ENCODE measurements at regions of chr14 and their contacts with region 1.

Region 1: DNA sequence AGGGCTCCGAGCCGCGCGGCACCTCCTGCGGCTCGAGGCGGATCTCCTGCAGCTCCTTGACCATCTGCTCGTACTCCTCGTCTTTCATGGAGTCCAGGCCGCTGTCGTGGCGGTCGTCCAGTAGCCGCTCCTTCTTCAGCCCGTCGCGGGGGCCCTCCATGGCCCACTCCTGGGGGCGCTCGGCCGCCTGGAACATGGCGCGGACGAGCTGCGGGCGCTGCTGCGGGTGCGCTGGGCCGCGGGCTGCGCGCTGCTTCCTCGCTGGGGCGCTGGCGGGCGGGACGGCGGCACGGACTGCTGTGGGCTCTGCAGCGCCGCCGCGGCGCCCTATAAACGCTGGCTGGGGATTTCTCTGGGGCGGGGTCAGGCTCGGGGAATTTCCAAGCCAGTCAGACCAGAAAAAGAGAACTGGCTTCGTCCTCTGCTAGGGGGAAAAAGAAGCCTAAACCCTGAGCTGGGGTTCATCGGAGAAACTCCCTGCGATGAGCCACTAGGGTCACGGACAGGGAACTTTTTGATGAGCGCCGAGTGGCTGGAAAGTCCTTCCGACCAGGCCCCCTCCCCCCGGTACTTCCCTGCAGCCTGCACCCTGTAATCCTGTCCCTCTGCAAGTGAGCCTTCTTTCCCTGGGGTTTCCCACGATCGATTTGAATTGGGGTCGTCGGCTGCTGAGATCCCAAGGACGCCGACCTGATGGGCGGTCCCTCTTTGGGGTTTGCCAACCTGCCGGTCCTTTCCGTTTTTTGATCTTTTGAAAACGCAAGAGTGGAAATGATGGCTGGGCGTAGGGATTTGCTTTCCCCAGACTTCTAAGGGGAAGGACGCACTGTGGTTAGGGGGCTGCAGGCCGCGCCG is at the start of gene NFKBIA:
- DNase-seq: peak; percentile 86
- ATAC-seq: peak; percentile 63
- H3K4me3 ChIP-seq: peak within 1 kb of the TSS; percentile 98
- H3K27ac ChIP-seq: peak within 1 kb of the TSS; percentile 89
- H3K4me1 ChIP-seq: peaks cover 14% of the 10 kb centered on the region
- H3K27me3 ChIP-seq: no peaks in the 10 kb centered on the region
- CTCF ChIP-seq: peak; percentile 35 to 39 (median 39); a peak in 3 of 6 replicates
- EP300 ChIP-seq: peak; percentile 78 to 83; a peak in 2 of 4 replicates
- POLR2A ChIP-seq: peak; percentile 95
- RAD21 ChIP-seq: peak; percentile 25; the same call in 1 of the 2 replicates
- polyA plus RNA-seq, gene NFKBIA: 123 to 159 TPM

Region 2: GRCh38 chr14:35140718-35141581 is 263.7 kb before region 1 on chr14:
- CTCF ChIA-PET with region 1: interaction called, 324 read pairs
- POLR2A ChIA-PET with region 1: interaction called, 5 read pairs
- RAD21 ChIA-PET with region 1: interaction called, 257 read pairs
- SMC1A ChIA-PET with region 1: interaction called, 362 read pairs
- in situ Hi-C with region 1: loop called (anchors 5 kb)
- intact Hi-C with region 1: loop called (anchors 1 kb)
- DNase-seq: no peak
- ATAC-seq: peak; percentile 60
- H3K4me3 ChIP-seq: no peak overlapping the region
- H3K27ac ChIP-seq: no peak overlapping the region
- H3K4me1 ChIP-seq: peaks cover 10% of the 10 kb centered on the region
- H3K27me3 ChIP-seq: no peaks in the 10 kb centered on the region
- CTCF ChIP-seq: peak in 2 of 3 experiments; percentile 11 to 23; a peak in 3 of 6 replicates
- EP300 ChIP-seq: no peak
- POLR2A ChIP-seq: no peak
- RAD21 ChIP-seq: peak; percentile 60

Region 3: DNA sequence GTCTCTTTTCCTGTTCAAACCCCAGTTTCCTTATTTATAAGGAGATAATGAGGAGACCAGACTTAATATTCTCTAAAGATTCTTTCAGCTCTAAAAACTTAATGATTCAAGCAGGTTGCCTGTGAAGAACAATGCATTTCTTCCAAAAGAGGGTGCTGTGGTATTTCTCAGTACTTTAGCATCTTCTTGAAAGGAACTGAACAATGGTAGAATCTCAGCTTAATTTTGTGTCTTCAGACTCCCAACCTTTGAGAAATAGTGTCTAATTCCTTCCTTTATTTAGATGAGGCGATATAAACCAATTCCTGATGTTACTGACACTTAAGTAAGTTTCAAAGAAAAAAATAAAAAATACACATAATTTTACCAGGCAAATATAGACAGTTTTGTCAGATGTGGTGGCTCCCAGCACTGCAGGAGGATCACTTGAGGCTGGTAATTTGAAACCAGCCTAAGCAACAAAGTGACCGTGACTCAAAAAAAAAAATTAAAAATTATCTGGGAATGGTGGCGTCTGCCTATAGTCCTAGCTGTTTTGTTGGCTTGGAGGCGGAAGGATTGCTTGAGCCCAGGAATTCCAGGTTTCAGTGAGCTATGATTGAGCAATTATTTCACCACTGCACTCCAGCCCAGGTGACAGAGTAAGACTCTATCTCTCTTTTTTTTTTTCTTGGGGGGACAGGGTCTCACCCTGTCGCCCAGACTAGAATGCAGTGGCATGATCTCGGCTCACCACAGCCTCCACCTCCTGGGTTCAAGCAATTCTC is 189.4 kb before region 1 on chr14:
- CTCF ChIA-PET with region 1: interaction called, 26 read pairs
- POLR2A ChIA-PET with region 1: interaction called, 3 read pairs
- RAD21 ChIA-PET with region 1: interaction called, 12 read pairs
- SMC1A ChIA-PET with region 1: interaction called, 14 read pairs
- in situ Hi-C with region 1: no loop called
- intact Hi-C with region 1: loop called (anchors 1 kb)
- DNase-seq: no peak
- ATAC-seq: peak; percentile 63
- H3K4me3 ChIP-seq: no peak overlapping the region
- H3K27ac ChIP-seq: no peak overlapping the region
- H3K4me1 ChIP-seq: no peaks in the 10 kb centered on the region
- H3K27me3 ChIP-seq: no peaks in the 10 kb centered on the region
- CTCF ChIP-seq: peak; percentile 24 to 61 (median 31); a peak in 5 of 6 replicates
- EP300 ChIP-seq: no peak
- POLR2A ChIP-seq: no peak
- RAD21 ChIP-seq: peak; percentile 69

Region 4: GRCh38 chr14:35285168-35286002 is 119.3 kb before region 1 on chr14:
- CTCF ChIA-PET with region 1: interaction called, 42 read pairs
- POLR2A ChIA-PET with region 1: interaction called, 93 read pairs
- RAD21 ChIA-PET with region 1: interaction called, 96 read pairs
- SMC1A ChIA-PET with region 1: interaction called, 74 read pairs
- in situ Hi-C with region 1: loop called (anchors 10 kb)
- intact Hi-C with region 1: loop called (anchors 1 kb)
- DNase-seq: peak; percentile 95
- ATAC-seq: peak; percentile 82
- H3K4me3 ChIP-seq: peak overlapping the region; percentile 51; the same call in 1 of the 2 replicates
- H3K27ac ChIP-seq: peak overlapping the region; percentile 91
- H3K4me1 ChIP-seq: peaks cover 53% of the 10 kb centered on the region
- H3K27me3 ChIP-seq: no peaks in the 10 kb centered on the region
- CTCF ChIP-seq: no peak
- EP300 ChIP-seq: peak; percentile 70 to 73; a peak in 3 of 4 replicates
- POLR2A ChIP-seq: no peak
- RAD21 ChIP-seq: peak; percentile 19; the same call in 1 of the 2 replicates

Region 5: DNA sequence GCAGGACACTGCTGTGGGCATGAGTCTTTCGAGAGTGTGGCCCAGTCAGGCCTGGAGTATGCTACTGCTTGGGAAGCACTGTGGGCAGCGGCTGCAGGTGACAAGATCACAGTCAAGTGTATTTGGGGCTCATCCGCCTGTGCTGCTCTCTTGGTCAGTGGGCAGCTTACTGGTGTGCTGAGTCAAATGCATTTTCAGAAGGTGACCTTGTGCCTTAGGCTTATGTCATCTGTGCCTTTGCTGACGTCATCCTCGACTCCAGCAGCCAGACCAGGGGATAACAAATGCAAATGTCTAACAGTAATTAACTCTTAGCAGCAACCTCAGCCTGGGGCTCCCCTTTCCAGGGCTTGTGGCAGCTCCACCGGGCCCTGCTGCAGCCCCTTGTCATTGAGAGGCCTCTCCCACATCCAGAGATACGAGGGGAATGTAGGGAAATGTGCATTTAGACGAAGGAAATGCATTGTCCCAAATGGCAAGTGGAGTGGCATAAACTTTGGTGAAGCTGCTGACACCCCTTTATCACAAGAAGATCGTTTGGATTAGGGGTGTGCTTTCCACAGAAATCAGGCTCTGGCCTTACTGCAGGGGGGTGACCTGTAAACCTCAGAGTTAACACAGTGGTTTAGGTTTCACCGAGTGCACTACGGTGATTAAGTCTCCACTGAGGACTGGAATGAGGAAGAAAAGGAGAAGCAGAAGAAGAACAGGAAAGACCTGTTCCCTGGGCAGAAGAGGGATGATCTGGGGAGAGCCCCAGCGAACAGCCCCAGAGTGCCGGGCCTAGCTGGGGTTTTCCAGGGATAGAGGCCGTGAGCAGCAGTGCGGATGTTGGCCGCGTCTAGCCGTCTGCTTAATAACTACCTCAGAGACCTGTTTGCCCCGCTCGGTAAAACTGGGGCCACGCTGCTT is 72.8 kb before region 1 on chr14:
- CTCF ChIA-PET with region 1: interaction called, 4 read pairs
- POLR2A ChIA-PET with region 1: interaction called, 3 read pairs
- RAD21 ChIA-PET with region 1: interaction called, 21 read pairs
- SMC1A ChIA-PET with region 1: interaction called, 5 read pairs
- in situ Hi-C with region 1: no loop called
- intact Hi-C with region 1: loop called (anchors 5 kb)
- DNase-seq: no peak
- ATAC-seq: peak; percentile 82
- H3K4me3 ChIP-seq: no peak overlapping the region
- H3K27ac ChIP-seq: peak overlapping the region; percentile 24
- H3K4me1 ChIP-seq: peaks cover 27% of the 10 kb centered on the region
- H3K27me3 ChIP-seq: no peaks in the 10 kb centered on the region
- CTCF ChIP-seq: no peak
- EP300 ChIP-seq: peak in 1 of 2 experiments; percentile 45; a peak in 1 of 4 replicates
- POLR2A ChIP-seq: no peak
- RAD21 ChIP-seq: 0 out of 2 replicates have a peak, but pooled peaks have one; percentile 2